Cardiac septum (tissue), 1 donor: ENCODE measurements at regions of chr1 and their contacts with region 1.

Region 1: GRCh38 chr1:204400882-204401510 is 10.6 kb downstream of the PPP1R15B start:
- DNase-seq: no peak

Region 2: GRCh38 chr1:204162231-204163074 is 238.5 kb before region 1 on chr1:
- intact Hi-C with region 1: loop called (anchors 2 kb)
- DNase-seq: peak; percentile 85

Region 3: GRCh38 chr1:204623894-204624361 is 222.9 kb after region 1 on chr1:
- intact Hi-C with region 1: no loop called
- DNase-seq: no peak